Activated T-helper 1 cell treated with anti-CD3 and anti-CD28 coated beads, Interleukin-12 subunit alpha, Interleukin-12 subunit beta, Interleukin-2, Interleukin-4 antibody, amounts not matched to agents 30 ng/mL and 10 ng/mL and 1 ng/mL, durations not matched to agents 14 hours and 24 hours and 36 hours (primary cell): ENCODE measurements at regions of chr1 and their contacts with region 1.

Region 1: DNA sequence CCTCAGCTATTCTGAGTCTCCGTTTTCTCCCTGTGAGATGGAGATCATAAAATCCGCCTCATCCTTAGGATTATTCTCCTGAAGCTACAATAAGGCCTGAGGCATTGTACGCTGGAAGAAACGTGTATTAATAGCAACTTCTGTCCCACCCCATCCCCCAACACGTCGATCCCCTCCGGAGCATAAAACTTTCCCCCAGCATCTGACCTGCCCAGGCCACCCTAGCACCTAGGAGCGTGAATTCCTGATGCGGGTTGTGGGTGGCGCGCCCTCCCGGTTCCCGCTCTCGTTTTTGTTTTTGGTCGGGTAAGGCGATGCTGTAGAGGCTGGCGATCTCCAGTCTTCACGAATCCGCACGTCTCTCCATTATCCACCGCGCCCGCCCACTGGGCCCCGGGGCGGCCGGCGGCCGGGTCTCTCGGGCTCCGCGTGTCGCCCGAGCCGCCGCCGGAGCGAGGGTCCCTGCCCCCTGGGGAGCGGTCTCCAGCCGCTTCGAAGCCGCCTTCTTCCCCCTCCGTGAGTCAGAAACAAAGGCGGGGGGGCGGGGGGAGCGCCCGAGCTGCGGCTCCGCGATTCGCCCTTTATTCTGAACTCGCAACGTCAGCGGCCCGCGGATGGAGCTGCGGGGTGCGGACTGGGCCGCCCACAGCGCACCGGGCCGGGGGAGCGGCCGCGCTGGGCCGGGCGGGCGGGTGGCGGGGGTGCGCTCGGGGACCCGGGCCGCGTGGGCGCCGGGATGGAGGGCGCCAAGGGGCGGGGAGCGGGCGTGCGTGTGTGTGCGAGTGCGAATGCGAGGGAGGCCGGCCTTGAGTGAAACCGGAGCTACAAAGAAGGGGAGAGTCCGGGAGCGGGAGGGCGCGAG is at the start of gene PLEKHO1:
- DNase-seq: peak; percentile 68
- H3K4me3 Mint-ChIP-seq: peak within 1 kb of the TSS; percentile 87
- H3K27ac Mint-ChIP-seq: peak within 1 kb of the TSS; percentile 79
- H3K4me1 Mint-ChIP-seq: peaks cover 47% of the 10 kb centered on the region
- H3K27me3 Mint-ChIP-seq: peaks cover 24% of the 10 kb centered on the region
- total RNA-seq, gene PLEKHO1: 27.1 and 35.4 TPM in 2 replicates

Region 2: DNA sequence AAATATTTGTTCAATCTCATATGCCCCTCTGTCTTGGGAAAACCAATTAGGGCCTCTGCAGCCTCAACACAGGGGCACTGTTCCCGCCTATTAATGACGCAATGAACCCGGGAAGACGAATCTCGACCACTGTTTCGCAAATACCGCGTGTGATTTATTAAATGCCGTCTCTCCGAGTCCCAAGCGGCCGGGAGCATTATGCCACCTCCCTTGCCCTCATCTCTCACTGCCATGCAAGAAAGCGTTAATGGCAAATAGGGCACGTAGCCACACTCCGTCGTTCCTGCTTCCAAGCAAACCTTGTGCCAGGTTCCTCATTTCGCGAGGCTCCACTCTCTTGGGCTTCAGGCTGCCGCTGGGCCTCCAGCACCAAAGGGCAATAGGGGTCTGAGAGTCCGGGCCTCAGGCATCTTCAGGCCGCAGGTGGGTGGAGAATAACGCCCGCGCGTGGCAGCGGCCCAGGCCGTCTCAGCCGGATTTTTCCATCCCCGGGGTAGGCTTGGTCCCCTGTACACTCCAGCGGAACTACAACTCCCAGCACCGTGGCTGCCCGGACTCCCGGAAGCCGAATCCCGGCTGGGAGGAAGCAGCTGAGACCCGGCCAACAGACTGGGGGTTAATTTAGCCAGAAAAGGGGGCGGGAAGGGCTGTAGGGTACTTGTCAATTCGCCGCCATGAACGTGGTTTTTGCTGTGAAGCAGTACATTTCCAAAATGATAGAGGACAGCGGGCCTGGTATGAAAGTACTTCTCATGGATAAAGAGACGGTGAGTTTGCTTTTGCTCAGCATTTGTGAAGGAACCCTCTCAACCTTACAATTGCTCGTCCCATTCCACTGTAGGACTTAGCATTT is 82.1 kb before region 1 on chr1 and contains the start of gene VPS45:
- intact Hi-C with region 1: loop called (anchors 2 kb)
- DNase-seq: peak; percentile 83
- H3K4me3 Mint-ChIP-seq: peak within 1 kb of the TSS; percentile 97
- H3K27ac Mint-ChIP-seq: peak within 1 kb of the TSS; percentile 98
- H3K4me1 Mint-ChIP-seq: peaks cover 45% of the 10 kb centered on the region
- H3K27me3 Mint-ChIP-seq: peaks cover 5% of the 10 kb centered on the region
- total RNA-seq, gene VPS45: 25.9 and 30.2 TPM in 2 replicates

Region 3: DNA sequence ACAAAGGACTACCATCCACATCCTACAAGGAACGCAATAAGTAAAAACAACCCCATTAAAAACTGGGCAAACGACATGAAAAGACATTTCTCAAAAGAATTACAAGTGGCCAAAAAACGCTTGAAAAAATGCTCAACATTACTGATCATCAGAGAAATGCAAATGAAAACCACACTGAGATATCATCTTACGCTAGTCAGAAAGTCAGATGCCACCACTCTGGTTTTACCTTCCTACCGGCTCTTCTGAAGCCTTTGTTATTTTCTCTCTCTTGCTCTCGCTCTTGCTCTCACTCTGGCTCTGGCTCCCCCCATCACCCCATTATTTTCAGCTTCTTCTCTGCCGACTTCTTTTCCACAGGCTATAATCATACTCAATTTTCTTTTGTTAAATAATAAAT is 43.2 kb before region 1 on chr1:
- intact Hi-C with region 1: loop called (anchors 5 kb)
- DNase-seq: peak; percentile 4
- H3K4me3 Mint-ChIP-seq: no peak overlapping the region
- H3K27ac Mint-ChIP-seq: no peak overlapping the region
- H3K4me1 Mint-ChIP-seq: peaks cover 48% of the 10 kb centered on the region
- H3K27me3 Mint-ChIP-seq: no peaks in the 10 kb centered on the region

Region 4: DNA sequence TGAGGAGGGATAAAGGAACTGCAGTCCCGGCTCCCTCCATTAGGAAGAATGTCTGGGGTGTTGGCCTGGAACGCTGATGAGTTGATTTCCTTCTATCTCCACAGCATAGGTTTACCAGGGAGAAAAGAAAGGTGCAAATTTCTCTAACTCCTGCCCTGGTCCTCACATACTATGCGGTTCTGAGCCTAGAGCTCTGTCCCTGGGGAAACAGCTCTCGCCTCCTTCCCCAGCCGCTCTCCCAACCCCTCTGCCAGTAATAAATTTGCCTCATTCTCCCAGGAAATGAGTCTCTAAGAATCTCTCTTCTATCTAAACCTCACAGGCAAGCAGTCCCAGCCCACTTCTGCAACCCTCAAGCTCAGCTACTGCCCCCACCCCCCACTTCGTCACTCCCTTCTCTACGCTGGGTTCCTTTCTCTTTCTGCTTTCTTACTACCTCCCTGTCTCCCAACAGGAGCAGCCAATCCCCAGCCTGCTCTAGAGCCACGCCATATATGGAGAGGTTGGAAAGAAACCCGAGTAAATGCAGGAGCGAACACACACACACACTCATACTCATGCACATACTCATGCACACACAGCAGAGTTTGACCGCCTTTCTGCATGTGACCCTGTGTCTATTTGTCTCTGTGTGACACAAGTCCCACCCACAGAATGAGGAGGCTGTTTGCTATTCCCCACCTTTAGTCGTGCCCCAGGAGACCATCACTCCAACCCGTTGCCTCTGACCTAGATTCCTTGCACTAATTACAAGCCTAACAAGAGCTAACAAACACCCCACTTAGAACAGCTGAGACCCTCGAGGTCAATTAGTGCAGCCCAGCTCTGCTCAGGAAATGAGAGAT is 13.6 kb after region 1 on chr1:
- intact Hi-C with region 1: loop called (anchors 2 kb)
- DNase-seq: no peak
- H3K4me3 Mint-ChIP-seq: no peak overlapping the region
- H3K27ac Mint-ChIP-seq: no peak overlapping the region
- H3K4me1 Mint-ChIP-seq: peaks cover 43% of the 10 kb centered on the region
- H3K27me3 Mint-ChIP-seq: peaks cover 5% of the 10 kb centered on the region

Region 5: DNA sequence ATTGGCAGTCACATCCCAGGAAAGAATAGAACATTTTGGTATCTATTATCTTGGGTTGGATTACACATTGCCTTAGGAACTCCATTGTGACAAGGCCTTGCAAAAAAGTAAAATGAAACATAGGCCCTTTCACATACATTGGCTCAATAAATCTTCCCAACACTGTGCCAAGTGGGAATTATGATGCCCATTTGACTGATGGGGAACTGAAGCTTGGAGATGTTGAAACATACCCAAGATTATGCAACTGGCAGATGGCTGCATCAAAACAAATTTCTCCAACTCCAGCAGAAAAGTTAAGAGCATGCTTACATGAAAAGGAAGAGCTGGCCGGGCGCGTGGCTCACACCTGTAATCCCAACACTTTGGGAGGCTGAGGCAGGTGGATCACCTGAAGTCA is 27.1 kb after region 1 on chr1:
- intact Hi-C with region 1: no loop called
- DNase-seq: no peak
- H3K4me3 Mint-ChIP-seq: no peak overlapping the region
- H3K27ac Mint-ChIP-seq: no peak overlapping the region
- H3K4me1 Mint-ChIP-seq: no peaks in the 10 kb centered on the region
- H3K27me3 Mint-ChIP-seq: peaks cover 1% of the 10 kb centered on the region

Region 6: GRCh38 chr1:150186789-150187559 is 37.5 kb after region 1 on chr1:
- intact Hi-C with region 1: loop called (anchors 5 kb)
- DNase-seq: no peak
- H3K4me3 Mint-ChIP-seq: peak overlapping the region; percentile 12
- H3K27ac Mint-ChIP-seq: peak overlapping the region; percentile 76
- H3K4me1 Mint-ChIP-seq: peaks cover 14% of the 10 kb centered on the region
- H3K27me3 Mint-ChIP-seq: peaks cover 12% of the 10 kb centered on the region

Region 7: DNA sequence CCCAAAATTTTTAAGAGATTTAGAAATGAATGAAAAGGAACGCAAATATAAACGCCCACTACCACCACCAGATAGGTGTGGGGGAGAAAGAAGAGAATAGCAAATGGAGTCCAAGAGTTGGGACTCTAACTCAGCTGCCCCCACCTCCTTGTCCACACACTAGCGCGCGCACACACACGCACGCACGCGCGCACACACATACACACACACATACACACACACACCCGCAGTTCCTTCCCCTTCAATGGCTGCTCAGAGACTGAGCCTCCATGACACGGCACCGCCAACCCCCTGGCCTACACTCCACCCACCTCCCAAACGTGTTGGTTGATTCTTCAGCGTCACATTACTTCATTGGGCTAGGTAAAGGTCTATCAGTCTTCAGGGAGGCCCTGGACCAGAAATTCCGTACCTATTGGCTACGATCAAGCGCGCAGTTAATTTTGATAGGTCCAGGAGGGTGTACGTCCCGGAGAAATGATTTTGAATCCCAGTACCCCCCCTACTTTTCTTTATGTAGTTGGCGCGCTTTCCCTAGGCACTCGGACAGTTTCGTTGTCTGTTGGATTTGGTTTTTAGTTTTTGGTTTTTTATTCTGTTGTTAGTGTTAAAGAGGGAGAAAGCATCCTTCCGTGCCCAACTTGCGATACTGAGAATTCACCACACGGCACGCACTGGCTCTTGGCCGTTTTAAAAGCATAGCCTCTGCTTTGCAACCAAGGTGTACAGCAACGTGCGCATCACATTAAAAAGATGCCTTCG is 86.5 kb after region 1 on chr1 and contains the start of gene ANP32E:
- intact Hi-C with region 1: no loop called
- DNase-seq: peak; percentile 93
- H3K4me3 Mint-ChIP-seq: no peak within 1 kb of the TSS
- H3K27ac Mint-ChIP-seq: peak within 1 kb of the TSS; percentile 99
- H3K4me1 Mint-ChIP-seq: peaks cover 19% of the 10 kb centered on the region
- H3K27me3 Mint-ChIP-seq: peaks cover 3% of the 10 kb centered on the region
- total RNA-seq, gene ANP32E: 196 and 217 TPM in 2 replicates